CD8-positive, alpha-beta memory T cell (primary cell): ENCODE measurements at regions of chr5 and their contacts with region 1.

Region 1: GRCh38 chr5:131263648-131264450 is at the start of gene CDC42SE2:
- DNase-seq: peak; percentile 80 to 90 (median 88)
- H3K4me3 ChIP-seq: peak within 1 kb of the TSS; percentile 89
- H3K4me3 Mint-ChIP-seq: peak within 1 kb of the TSS; percentile 87 to 99 (median 91)
- H3K27ac ChIP-seq: peak within 1 kb of the TSS; percentile 89
- H3K27ac Mint-ChIP-seq: peak within 1 kb of the TSS; percentile 92 to 99 (median 96)
- H3K4me1 ChIP-seq: peaks cover 52% of the 10 kb centered on the region
- H3K4me1 Mint-ChIP-seq: peaks cover 52 to 58% (median 58%) of the 10 kb centered on the region in 3 donors
- H3K27me3 ChIP-seq: no peaks in the 10 kb centered on the region
- H3K27me3 Mint-ChIP-seq: no peaks in the 10 kb centered on the region
- total RNA-seq, gene CDC42SE2: 125 to 131 TPM

Region 2: GRCh38 chr5:131165119-131165727 is 98.6 kb before region 1 on chr5 and contains the start of gene HINT1:
- CTCF ChIA-PET with region 1: interaction called, 13 read pairs
- POLR2A ChIA-PET with region 1: interaction called, 9 read pairs
- DNase-seq: peak; percentile 90 to 95 (median 91)
- H3K4me3 ChIP-seq: peak within 1 kb of the TSS; percentile 88
- H3K4me3 Mint-ChIP-seq: peak within 1 kb of the TSS; percentile 88 to 99 (median 97)
- H3K27ac ChIP-seq: peak within 1 kb of the TSS; percentile 92
- H3K27ac Mint-ChIP-seq: peak within 1 kb of the TSS; percentile 96 to 99 (median 98)
- H3K4me1 ChIP-seq: peaks cover 26% of the 10 kb centered on the region
- H3K4me1 Mint-ChIP-seq: peaks cover 42 to 69% (median 66%) of the 10 kb centered on the region in 3 donors
- H3K27me3 ChIP-seq: no peaks in the 10 kb centered on the region
- H3K27me3 Mint-ChIP-seq: peaks cover 0 to 4% of the 10 kb centered on the region in 2 donors
- total RNA-seq, gene HINT1: 358 to 364 TPM

Region 3: GRCh38 chr5:131209506-131210150 is 54.2 kb before region 1 on chr5:
- CTCF ChIA-PET with region 1: interaction called, 4 read pairs
- POLR2A ChIA-PET with region 1: interaction called, 12 read pairs
- DNase-seq: peak; percentile 10 to 87 (median 73)
- H3K4me3 ChIP-seq: peak overlapping the region; percentile 33
- H3K4me3 Mint-ChIP-seq: peak overlapping the region; percentile 41 to 85 (median 80)
- H3K27ac ChIP-seq: peak overlapping the region; percentile 52
- H3K27ac Mint-ChIP-seq: peak overlapping the region; percentile 82 to 99 (median 96)
- H3K4me1 ChIP-seq: peaks cover 51% of the 10 kb centered on the region
- H3K4me1 Mint-ChIP-seq: peaks cover 49 to 69% (median 61%) of the 10 kb centered on the region in 3 donors
- H3K27me3 ChIP-seq: no peaks in the 10 kb centered on the region
- H3K27me3 Mint-ChIP-seq: peaks cover 0 to 1% of the 10 kb centered on the region in 2 donors

Region 4: DNA sequence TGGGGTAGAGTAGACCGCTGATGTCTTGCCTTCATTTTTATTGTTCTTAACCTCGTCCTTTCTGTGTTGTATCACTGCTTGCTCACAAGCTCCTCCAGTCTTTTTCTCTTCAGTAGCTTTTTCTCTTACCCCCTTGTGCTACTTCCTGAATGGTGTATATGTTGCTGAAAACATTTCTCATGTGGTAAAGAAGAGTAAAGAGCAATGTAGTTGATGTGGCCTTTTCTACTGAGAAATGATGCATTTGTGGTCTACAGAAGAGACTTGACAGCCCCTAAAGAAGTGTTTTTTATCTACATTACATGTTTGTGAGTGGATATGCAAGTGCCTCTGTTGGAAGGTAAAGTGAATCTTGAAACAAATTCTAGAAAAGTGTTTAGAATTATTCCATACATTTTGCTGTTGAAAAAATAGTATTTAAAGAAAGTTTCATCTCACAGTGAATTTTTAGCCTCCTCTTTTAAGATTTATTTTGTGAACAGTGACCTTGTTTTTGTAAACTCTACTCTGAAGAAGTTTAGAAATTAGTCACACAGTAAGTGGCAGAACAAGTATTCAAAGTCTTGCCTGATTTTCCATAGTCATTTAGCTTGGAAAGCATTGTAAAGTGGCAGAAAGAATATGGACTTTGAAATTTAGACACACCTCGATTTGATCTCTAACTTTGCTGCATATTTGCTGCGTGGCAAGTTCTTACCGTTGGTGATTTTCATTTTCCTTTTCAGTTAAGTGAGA is 17.5 kb after region 1 on chr5:
- CTCF ChIA-PET with region 1: interaction called, 73 read pairs
- POLR2A ChIA-PET with region 1: interaction called, 44 read pairs
- DNase-seq: peak in 2 of 5 donors; percentile 85 to 88
- H3K4me3 ChIP-seq: peak overlapping the region; percentile 55
- H3K4me3 Mint-ChIP-seq: peak overlapping the region; percentile 68 to 84 (median 79)
- H3K27ac ChIP-seq: peak overlapping the region; percentile 34
- H3K27ac Mint-ChIP-seq: peak overlapping the region; percentile 66 to 96 (median 83)
- H3K4me1 ChIP-seq: peaks cover 86% of the 10 kb centered on the region
- H3K4me1 Mint-ChIP-seq: peaks cover 81 to 93% (median 89%) of the 10 kb centered on the region in 3 donors
- H3K27me3 ChIP-seq: no peaks in the 10 kb centered on the region
- H3K27me3 Mint-ChIP-seq: peaks cover 0 to 21% of the 10 kb centered on the region in 2 donors

Region 5: GRCh38 chr5:131316026-131316425 is 52.2 kb after region 1 on chr5:
- CTCF ChIA-PET with region 1: interaction called, 3 read pairs
- POLR2A ChIA-PET with region 1: interaction called, 17 read pairs
- DNase-seq: no peak
- H3K4me3 ChIP-seq: no peak overlapping the region
- H3K4me3 Mint-ChIP-seq: peak overlapping the region in 3 of 7 donors; percentile 16 to 46 (median 31)
- H3K27ac ChIP-seq: no peak overlapping the region
- H3K27ac Mint-ChIP-seq: peak overlapping the region in 6 of 8 donors; percentile 11 to 98 (median 56)
- H3K4me1 ChIP-seq: peaks cover 46% of the 10 kb centered on the region
- H3K4me1 Mint-ChIP-seq: peaks cover 78 to 92% (median 87%) of the 10 kb centered on the region in 3 donors
- H3K27me3 ChIP-seq: no peaks in the 10 kb centered on the region
- H3K27me3 Mint-ChIP-seq: peaks cover 0 to 5% of the 10 kb centered on the region in 2 donors

Region 6: GRCh38 chr5:131417240-131417869 is 153.5 kb after region 1 on chr5:
- CTCF ChIA-PET with region 1: interaction called, 19 read pairs
- POLR2A ChIA-PET with region 1: no interaction called
- DNase-seq: peak; percentile 62 to 87 (median 75)
- H3K4me3 ChIP-seq: no peak overlapping the region
- H3K4me3 Mint-ChIP-seq: peak overlapping the region in 6 of 7 donors; percentile 3 to 77 (median 67)
- H3K27ac ChIP-seq: no peak overlapping the region
- H3K27ac Mint-ChIP-seq: peak overlapping the region; percentile 34 to 93 (median 88)
- H3K4me1 ChIP-seq: peaks cover 25% of the 10 kb centered on the region
- H3K4me1 Mint-ChIP-seq: peaks cover 35 to 52% (median 50%) of the 10 kb centered on the region in 3 donors
- H3K27me3 ChIP-seq: no peaks in the 10 kb centered on the region
- H3K27me3 Mint-ChIP-seq: no peaks in the 10 kb centered on the region